Vagina (tissue), 2 donors: ENCODE measurements at regions of chr20 and their contacts with region 1.

Region 1: DNA sequence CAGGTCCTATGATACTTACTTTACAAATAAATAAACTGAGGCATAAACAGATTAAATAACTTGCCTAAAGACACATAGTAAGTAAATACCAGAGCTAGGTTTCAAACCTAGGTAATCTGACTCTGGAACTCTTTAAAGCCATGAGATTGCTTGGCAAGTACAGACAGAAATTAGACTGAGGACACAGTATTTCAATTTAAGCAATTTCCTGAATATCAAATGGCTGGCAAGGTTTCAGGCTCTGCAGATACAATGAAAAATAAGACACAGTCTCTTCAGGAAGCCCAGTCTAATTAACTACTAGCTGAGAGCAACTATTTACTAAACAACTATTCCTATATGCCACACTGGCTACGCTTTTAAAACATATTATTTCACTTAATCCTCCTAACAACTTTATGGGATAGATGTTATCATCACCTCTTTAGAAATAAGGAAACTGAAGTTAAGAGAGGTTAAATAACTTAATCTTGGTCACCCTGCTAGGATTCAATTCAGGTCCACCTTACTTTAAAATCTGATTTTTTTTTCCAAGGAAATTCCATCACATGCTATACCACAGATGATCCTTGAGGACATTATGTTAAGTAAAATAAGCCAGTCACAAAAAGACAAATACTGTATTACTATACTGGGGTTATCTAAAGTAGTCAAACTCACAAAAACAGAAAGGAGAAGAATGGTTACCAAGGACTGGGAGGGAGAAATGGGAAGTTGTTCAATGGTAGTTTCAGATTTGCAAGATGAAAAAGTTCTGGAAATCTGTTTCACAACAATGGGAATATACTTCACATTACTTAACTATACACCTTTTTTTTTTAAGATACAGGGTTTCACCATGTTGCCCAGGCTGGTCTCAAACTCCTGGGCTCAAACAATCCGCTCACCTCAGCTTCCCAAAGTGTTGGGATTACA is 4.1 kb downstream of the TRPC4AP start:
- DNase-seq: no peak
- H3K4me3 ChIP-seq: no peak overlapping the region
- H3K27ac ChIP-seq: peak overlapping the region; percentile 24
- H3K4me1 ChIP-seq: peaks cover 53% of the 10 kb centered on the region
- H3K27me3 ChIP-seq: no peaks in the 10 kb centered on the region
- CTCF ChIP-seq: no peak
- POLR2A ChIP-seq: no peak

Region 2: GRCh38 chr20:35063168-35063567 is 25.3 kb before region 1 on chr20:
- intact Hi-C with region 1: loop called (anchors 1 kb)
- DNase-seq: no peak
- H3K4me3 ChIP-seq: no peak overlapping the region
- H3K27ac ChIP-seq: no peak overlapping the region
- H3K4me1 ChIP-seq: peaks cover 19% of the 10 kb centered on the region
- H3K27me3 ChIP-seq: no peaks in the 10 kb centered on the region
- CTCF ChIP-seq: no peak
- POLR2A ChIP-seq: no peak